CD4-positive, alpha-beta T cell (primary cell): ENCODE measurements at regions of chr4 and their contacts with region 1.

Region 1: DNA sequence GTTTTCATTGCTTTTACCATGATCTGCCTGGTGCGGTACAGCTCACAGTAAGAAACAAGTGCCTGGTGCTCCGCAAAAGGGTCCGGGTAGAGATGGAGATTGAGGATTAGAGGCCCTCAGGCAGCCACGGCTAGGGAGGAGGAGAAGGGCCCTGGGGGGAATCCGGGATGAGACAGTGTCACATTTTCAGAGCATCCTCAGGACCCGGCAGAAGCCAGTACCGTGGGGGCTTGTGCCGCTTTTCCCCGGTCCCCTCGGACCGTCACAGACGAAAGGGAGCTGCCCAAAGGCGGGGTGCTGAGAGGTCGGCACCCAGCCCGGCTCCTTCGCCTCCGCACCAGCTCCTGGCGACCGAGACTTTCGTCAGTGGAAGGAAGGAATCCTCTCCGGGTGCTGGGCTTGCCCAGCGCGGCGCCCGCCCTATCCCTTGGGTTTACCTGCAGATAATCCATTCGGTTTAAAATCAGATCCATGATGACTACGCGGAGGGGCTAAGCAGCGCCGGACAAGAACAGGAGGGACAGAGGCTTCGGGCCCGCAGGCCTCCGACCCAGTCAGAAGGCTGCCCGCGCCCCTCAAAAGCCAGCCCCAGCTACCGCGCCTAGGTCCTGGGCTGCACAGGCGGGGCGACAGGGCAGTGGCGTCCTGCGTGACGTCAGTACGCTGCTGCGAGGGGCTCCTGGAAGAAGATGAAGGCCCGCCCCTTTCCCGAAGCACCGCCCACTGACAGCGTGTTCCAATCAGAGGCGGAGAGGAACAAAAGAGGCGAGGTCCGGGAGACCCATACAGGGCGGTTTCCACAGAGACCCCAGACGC is at the start of gene BBS7:
- DNase-seq: peak; percentile 84 to 100 (median 96)
- ATAC-seq: peak; percentile 98
- H3K4me3 ChIP-seq: peak within 1 kb of the TSS; percentile 80
- H3K4me3 Mint-ChIP-seq: peak within 1 kb of the TSS; percentile 99
- H3K27ac ChIP-seq: peak within 1 kb of the TSS in 1 of 2 donors; percentile 71
- H3K27ac Mint-ChIP-seq: peak within 1 kb of the TSS; percentile 87
- H3K4me1 ChIP-seq: peaks cover 12% of the 10 kb centered on the region
- H3K4me1 Mint-ChIP-seq: peaks cover 26% of the 10 kb centered on the region
- H3K27me3 ChIP-seq: peaks cover 0 to 8% of the 10 kb centered on the region in 2 experiments
- H3K27me3 Mint-ChIP-seq: peaks cover 20% of the 10 kb centered on the region
- CTCF ChIP-seq: no peak
- total RNA-seq, gene BBS7: 3.0 to 3.8 TPM

Region 2: DNA sequence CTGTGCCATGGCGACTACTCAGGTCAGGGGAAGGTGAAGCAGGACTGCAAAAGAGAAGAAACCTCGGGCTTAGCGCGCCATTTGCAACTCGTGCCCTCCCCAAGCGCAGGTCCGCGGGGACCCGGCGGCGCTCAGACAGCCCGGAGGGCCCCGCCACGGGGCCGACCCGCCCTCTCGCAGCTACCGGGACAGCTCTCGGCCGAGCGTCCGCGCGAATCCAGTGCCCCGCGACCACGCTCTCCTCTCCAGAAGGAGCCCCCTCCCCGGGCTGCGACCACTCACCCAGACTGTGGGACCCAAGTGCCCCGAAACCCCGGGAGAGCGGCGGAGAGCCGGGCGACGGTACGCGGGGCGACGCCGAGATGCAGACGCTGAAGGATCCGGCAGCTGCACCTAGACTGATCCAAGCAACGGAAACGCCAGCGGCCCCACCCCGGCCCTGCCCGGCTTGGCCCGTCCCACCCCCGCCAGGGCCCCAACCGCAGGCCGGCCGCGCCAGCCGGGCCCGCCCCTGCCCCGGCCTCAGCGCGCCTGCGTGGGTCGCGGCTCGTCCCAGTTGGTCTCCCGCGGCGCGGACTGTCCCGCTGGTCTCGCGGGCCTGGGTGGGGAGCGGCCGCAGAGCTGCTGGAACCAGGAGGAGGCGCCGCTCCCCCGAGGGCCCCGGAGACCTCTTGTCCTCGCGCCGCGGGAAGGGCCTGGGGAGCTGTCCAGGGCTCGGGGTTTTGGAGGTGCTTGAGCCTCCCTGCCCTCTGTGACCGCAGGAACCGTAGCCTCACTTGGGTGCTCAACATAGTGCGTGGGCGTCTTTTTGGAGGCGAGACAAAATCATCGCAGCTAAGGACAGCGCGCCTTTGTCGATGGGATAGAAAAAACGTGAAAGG is 173.2 kb before region 1 on chr4 and contains the start of gene ANXA5:
- CTCF ChIA-PET with region 1: no interaction called
- POLR2A ChIA-PET with region 1: interaction called, 4 read pairs
- intact Hi-C with region 1: loop called in 1 of 2 experiments (anchors 5 kb)
- DNase-seq: peak; percentile 26 to 87 (median 62)
- ATAC-seq: peak; percentile 82
- H3K4me3 ChIP-seq: peak within 1 kb of the TSS; percentile 92
- H3K4me3 Mint-ChIP-seq: peak within 1 kb of the TSS; percentile 99
- H3K27ac ChIP-seq: peak within 1 kb of the TSS in 1 of 2 donors; percentile 66
- H3K27ac Mint-ChIP-seq: peak within 1 kb of the TSS; percentile 95
- H3K4me1 ChIP-seq: peaks cover 19% of the 10 kb centered on the region
- H3K4me1 Mint-ChIP-seq: peaks cover 40% of the 10 kb centered on the region
- H3K27me3 ChIP-seq: no peaks in the 10 kb centered on the region
- H3K27me3 Mint-ChIP-seq: no peaks in the 10 kb centered on the region
- CTCF ChIP-seq: no peak
- total RNA-seq, gene ANXA5: 50.8 to 55.9 TPM

Region 3: DNA sequence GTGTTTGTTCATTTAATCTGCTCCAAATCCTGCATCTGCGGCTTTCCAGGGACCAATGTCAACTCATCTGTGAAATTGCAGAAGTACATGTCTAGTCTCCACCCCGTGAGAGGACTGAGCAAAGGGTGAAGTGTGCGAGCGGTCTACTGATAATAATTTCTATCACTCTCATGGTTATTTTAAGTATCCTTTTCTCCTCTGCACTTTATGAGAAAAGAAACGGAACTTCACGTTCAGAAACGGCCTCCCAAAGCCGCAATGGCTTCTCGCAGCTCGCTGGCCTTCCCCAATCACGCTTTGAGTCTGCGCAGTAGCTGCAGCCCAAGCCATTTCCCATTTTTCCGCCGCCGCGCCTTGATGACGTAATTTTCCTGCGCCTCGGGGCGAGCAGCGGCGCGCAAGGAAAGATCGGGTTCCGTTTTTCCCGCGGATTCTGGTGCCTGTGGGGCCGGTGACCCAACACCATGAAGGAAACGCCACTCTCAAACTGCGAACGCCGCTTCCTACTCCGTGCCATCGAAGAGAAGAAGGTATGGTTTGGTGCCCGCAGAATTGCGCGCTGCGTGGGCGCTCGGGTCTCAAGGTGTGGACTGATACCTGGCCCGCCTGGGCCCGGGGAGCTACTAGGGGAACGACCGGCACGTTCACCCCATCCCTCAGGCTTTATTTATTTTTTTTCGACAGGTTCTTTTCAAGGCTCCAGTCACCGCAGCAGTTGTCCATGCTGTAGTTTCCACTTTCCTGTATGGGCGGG is 68.9 kb before region 1 on chr4 and contains the start of gene EXOSC9:
- CTCF ChIA-PET with region 1: no interaction called
- POLR2A ChIA-PET with region 1: interaction called, 13 read pairs
- intact Hi-C with region 1: loop called in 1 of 2 experiments (anchors 5 kb)
- DNase-seq: peak; percentile 88 to 97 (median 94)
- ATAC-seq: peak; percentile 87
- H3K4me3 ChIP-seq: peak within 1 kb of the TSS; percentile 95
- H3K4me3 Mint-ChIP-seq: peak within 1 kb of the TSS; percentile 96
- H3K27ac ChIP-seq: peak within 1 kb of the TSS; percentile 80 to 96
- H3K27ac Mint-ChIP-seq: peak within 1 kb of the TSS; percentile 100
- H3K4me1 ChIP-seq: peaks cover 13% of the 10 kb centered on the region
- H3K4me1 Mint-ChIP-seq: peaks cover 51% of the 10 kb centered on the region
- H3K27me3 ChIP-seq: no peaks in the 10 kb centered on the region
- H3K27me3 Mint-ChIP-seq: no peaks in the 10 kb centered on the region
- CTCF ChIP-seq: no peak
- total RNA-seq, gene EXOSC9: 71.6 to 72.7 TPM